T-cell (primary cell): ENCODE measurements at regions of chr6 and their contacts with region 1.

Region 1: DNA sequence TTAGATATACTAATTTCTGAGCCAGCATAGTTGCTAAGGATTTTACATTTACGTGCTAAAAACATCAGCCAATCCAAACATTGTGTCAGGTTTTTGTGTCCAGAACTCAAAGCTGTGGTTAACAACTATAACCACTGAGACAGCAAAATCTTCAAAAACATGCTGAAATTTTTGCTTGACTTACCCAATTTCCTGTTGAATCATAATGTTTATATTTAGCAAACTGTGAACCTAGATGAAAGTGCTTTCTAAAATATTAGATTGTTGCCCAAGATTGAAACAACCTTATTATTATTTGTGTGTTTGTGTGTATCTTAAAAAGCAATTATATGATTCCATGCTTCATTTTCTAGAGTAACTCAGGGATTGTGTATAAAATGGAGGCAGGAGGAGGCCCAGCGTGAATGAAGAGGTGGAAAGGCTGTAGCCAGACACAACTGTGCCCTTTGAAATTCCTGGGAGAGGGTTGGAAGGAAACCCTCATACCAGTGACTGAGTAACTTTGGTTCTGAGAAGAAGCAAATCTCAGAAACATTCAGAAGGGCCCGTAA is 48.0 kb downstream of the ARMC2 start:
- DNase-seq: peak in 1 of 35 experiments; percentile 72
- ATAC-seq: peak; percentile 43 to 85 (median 69)
- H3K4me3 ChIP-seq: no peak overlapping the region
- H3K4me3 Mint-ChIP-seq: peak overlapping the region; percentile 44 to 69 (median 62)
- H3K27ac ChIP-seq: peak overlapping the region; percentile 86
- H3K27ac Mint-ChIP-seq: peak overlapping the region; percentile 89 to 98
- H3K4me1 ChIP-seq: peaks cover 0 to 40% of the 10 kb centered on the region in 2 experiments
- H3K4me1 Mint-ChIP-seq: peaks cover 16 to 49% (median 37%) of the 10 kb centered on the region in 3 donors
- H3K27me3 ChIP-seq: no peaks in the 10 kb centered on the region
- H3K27me3 Mint-ChIP-seq: no peaks in the 10 kb centered on the region

Region 2: DNA sequence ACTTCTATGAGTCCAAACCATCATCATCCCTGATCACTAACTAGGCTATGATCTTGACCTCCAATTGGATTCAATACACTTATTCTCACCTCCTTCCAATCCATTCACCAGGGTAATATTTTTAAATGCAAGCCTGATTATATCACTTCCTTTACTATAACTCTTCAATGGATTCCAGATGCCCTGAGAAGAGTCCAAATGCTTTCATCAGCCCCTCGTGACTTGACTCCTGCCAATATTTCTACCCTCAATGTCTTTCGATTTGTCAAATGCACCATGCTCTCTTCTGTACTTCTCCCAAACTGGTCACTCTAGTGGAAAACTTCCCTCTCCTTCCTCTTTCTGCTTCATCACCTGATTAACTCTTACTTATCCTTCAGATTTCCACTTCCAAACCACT is 415.3 kb after region 1 on chr6:
- CTCF ChIA-PET with region 1: no interaction called
- POLR2A ChIA-PET with region 1: interaction called in 1 of 2 experiments, 14 read pairs
- DNase-seq: no peak
- ATAC-seq: no peak
- H3K4me3 ChIP-seq: no peak overlapping the region
- H3K4me3 Mint-ChIP-seq: no peak overlapping the region
- H3K27ac ChIP-seq: no peak overlapping the region
- H3K27ac Mint-ChIP-seq: no peak overlapping the region
- H3K4me1 ChIP-seq: no peaks in the 10 kb centered on the region
- H3K4me1 Mint-ChIP-seq: no peaks in the 10 kb centered on the region
- H3K27me3 ChIP-seq: peaks cover 0 to 3% of the 10 kb centered on the region in 2 experiments
- H3K27me3 Mint-ChIP-seq: peaks cover 0 to 2% of the 10 kb centered on the region in 2 donors

Region 3: GRCh38 chr6:109678240-109678639 is 782.1 kb after region 1 on chr6:
- CTCF ChIA-PET with region 1: no interaction called
- POLR2A ChIA-PET with region 1: no interaction called
- DNase-seq: no peak
- ATAC-seq: no peak
- H3K4me3 ChIP-seq: no peak overlapping the region
- H3K4me3 Mint-ChIP-seq: no peak overlapping the region
- H3K27ac ChIP-seq: no peak overlapping the region
- H3K27ac Mint-ChIP-seq: peak overlapping the region in 1 of 2 donors; percentile 57
- H3K4me1 ChIP-seq: no peaks in the 10 kb centered on the region
- H3K4me1 Mint-ChIP-seq: peaks cover 0 to 16% (median 12%) of the 10 kb centered on the region in 3 donors
- H3K27me3 ChIP-seq: no peaks in the 10 kb centered on the region
- H3K27me3 Mint-ChIP-seq: no peaks in the 10 kb centered on the region